ENCODE measurements at regions of chr13 and their contacts with region 1.

Region 1: GRCh38 chr13:49652355-49653305 is 24.3 kb downstream of the ARL11 start:
- DNase-seq: peak; percentile 70
- ATAC-seq: peak; percentile 94
- H3K4me3 ChIP-seq: no peak overlapping the region
- H3K27ac ChIP-seq: no peak overlapping the region
- H3K4me1 ChIP-seq: peaks cover 5% of the 10 kb centered on the region; the same call in 1 of the 2 replicates
- H3K27me3 ChIP-seq: no peaks in the 10 kb centered on the region
- CTCF ChIP-seq: peak; percentile 78
- EP300 ChIP-seq: no peak
- POLR2A ChIP-seq: no peak
- RAD21 ChIP-seq: no peak; the same call in 1 of the 2 replicates

Region 2: DNA sequence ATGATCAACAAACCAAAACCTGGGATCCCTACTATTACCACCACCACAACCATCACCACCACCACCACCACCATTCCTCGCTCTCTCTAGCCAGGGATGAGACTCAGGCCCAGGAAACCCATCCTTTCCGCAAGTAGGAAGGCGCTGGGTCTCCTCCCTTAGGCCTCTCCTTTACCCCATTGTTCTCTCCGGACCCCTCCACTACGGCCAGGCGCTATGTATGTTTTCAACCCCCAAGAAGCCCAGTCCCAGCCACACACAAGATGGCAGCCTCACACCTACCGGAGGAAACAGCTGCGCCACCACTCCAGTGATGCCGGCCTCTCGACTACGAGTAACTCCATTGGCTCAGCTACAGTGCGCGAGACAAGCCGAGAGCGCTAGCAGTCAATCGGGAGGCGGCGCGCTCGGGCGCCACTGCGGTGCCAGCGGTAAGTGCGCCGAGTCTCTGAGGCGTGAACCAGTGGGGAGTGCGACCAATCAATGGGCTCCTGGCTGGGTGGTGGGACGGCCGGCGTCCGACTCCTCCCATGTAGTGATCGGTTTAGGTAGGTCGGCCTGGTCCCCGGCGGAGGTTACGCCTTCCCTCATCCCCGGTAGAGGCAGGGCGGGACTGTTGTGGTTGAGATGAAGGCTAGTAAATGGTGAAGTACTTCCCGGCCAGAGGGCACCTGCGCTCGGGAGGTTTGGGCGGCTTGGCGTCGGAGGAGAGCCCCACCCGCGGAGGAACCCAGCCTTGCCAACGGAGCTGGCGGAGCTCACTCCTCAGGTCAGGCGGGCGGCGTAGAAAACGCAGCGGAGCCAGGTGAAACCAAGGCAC is 208.7 kb before region 1 on chr13 and contains the starts of genes CAB39L and SETDB2:
- CTCF ChIA-PET with region 1: no interaction called
- POLR2A ChIA-PET with region 1: no interaction called
- in situ Hi-C with region 1: no loop called
- intact Hi-C with region 1: no loop called
- DNase-seq: peak; percentile 98
- ATAC-seq: peak; percentile 96
- H3K4me3 ChIP-seq: peak within 1 kb of the TSS; percentile 77 to 89 (median 83)
- H3K27ac ChIP-seq: peak within 1 kb of the TSS; percentile 94
- H3K4me1 ChIP-seq: peaks cover 35% of the 10 kb centered on the region
- H3K27me3 ChIP-seq: no peaks in the 10 kb centered on the region; a peak in 1 of 5 replicates
- CTCF ChIP-seq: peak; percentile 80
- EP300 ChIP-seq: 0 out of 4 replicates have a peak, but pooled peaks of 1 of the 2 experiments have one; percentile 17
- POLR2A ChIP-seq: peak; percentile 76
- RAD21 ChIP-seq: peak; percentile 46
- total RNA-seq, gene CAB39L: 6.1 and 8.3 TPM in 2 replicates
- total RNA-seq, gene SETDB2: 8.7 and 9.5 TPM in 2 replicates

Region 3: DNA sequence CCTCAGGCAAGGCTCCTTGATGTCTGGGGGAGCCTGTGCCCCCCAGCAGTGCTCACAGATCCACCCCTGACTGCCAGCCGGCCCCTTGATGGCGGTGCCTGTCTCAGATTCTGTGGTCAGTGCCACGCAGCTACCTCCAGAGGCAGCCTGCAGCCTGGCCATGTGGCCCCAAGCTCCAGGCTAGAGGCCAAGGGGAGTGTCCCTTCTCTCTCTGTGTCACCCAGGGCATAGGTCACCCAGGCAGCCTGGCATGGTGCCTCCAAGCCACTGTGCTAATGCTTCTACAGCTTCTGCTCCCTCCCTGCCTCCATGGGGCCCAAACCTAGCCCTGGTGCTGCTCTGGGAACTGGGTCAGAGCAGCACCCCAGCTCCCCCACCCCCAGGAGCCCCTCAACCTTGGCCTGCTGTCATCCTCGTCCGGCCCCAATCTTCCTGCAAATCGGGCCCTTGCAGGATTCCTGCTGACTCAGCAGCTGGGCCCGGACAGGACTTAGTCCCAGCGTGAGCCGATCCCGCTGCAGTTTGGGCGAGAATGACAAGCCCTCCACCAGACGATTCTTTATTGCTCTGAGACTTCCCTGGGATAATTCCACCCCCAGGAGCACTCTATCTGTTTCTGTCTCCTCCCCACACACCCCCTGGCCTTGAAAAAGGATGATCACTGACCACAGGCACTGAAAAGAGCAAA is 27.1 kb before region 1 on chr13:
- CTCF ChIA-PET with region 1: no interaction called
- POLR2A ChIA-PET with region 1: no interaction called
- in situ Hi-C with region 1: no loop called
- intact Hi-C with region 1: loop called (anchors 1 kb)
- DNase-seq: peak; percentile 80
- ATAC-seq: peak; percentile 95
- H3K4me3 ChIP-seq: peak overlapping the region; percentile 46 to 72 (median 57)
- H3K27ac ChIP-seq: peak overlapping the region; percentile 81
- H3K4me1 ChIP-seq: peaks cover 80% of the 10 kb centered on the region
- H3K27me3 ChIP-seq: no peaks in the 10 kb centered on the region
- CTCF ChIP-seq: no peak
- EP300 ChIP-seq: no peak
- POLR2A ChIP-seq: peak; percentile 64 to 71; a peak in 3 of 4 replicates
- RAD21 ChIP-seq: no peak; the same call in 1 of the 2 replicates

Measured in HepG2 (cell line).